BJ (cell line): ENCODE measurements at regions of chr12 and their contacts with region 1.

Region 1: DNA sequence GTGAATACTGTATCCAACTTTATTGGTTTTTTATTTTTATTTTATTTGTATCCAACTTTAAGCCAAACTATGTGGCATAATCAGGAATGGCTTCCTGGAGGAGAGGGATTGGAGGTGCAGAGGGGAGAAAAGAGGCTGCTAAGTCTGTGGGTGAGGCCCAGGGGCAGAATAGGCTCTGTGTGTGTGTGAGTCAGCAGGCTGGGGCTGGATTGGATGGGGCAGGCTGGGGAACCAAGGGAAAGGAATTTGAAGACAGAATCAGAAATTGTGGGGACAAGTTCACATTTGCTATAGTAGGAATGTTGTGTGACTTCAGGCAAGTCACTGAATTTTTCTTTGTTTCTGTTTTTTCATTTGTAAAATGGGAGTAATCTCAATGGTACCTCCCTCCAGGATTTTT is 12.8 kb upstream of the RILPL1 start:
- DNase-seq: no peak
- H3K4me3 ChIP-seq: no peak overlapping the region
- H3K27me3 ChIP-seq: peaks cover 3% of the 10 kb centered on the region; the same call in 1 of the 2 replicates
- CTCF ChIP-seq: no peak

Region 2: DNA sequence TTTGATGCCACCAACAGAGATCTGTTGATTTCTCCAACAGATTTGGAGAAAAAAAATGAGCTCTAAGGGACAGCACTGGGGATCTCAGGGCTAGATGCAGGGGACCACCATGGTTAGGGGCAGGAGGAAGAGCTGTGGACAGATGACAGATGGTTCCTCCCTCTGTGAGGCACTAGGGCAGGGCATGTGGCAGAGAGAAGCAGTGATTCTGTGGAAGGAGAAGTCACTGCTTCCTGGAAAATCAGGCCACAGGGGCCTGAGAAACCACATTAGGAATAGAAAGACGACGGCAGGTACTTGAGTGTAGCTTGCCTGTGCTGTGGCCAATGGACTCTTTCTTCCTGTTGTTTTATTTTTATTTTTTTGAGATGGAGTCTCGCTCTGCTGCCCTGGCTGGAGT is 13.2 kb after region 1 on chr12:
- CTCF ChIA-PET with region 1: interaction called, 4 read pairs
- POLR2A ChIA-PET with region 1: interaction called, 11 read pairs
- DNase-seq: no peak
- H3K4me3 ChIP-seq: no peak overlapping the region
- H3K27me3 ChIP-seq: peaks cover 7% of the 10 kb centered on the region
- CTCF ChIP-seq: no peak